Mammary epithelial cell (primary cell): ENCODE measurements at regions of chr2 and their contacts with region 1.

Region 1: DNA sequence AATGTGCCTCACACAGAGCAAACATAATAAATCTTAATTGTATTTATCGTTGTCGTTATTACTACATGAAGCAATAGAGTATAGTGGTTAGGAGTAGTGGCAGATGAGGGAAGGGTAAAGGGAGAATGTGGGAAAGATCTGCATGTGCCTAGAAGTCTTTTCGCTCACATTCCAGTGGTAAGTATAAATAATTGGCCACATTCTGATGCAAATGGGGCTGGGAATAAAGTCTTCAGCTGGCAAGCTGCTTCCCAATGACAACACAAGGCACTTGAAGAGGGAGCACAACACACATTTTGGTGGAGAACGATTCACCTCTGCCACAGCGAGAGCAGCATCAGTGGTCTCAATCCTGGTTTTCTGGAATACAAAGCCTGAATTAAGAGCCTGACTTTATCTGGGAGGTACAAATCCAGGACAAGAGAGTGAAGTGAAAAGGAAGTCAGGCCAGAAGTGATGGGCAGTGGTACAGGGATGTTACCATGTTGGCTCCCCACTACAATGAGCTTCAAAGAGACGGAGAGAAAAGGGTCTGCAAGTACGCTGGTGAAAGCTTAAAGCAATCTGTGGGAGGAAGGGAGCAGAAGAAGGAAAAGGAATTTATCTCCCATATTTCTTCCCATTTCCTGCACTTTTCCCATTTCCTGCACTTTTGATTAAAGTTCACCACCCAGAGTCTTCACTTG is 112.3 kb downstream of the ARHGAP15 start:
- DNase-seq: no peak
- H3K4me3 ChIP-seq: no peak overlapping the region
- H3K27ac ChIP-seq: no peak overlapping the region
- H3K4me1 ChIP-seq: no peaks in the 10 kb centered on the region
- H3K27me3 ChIP-seq: peaks cover 2% of the 10 kb centered on the region
- CTCF ChIP-seq: no peak

Region 2: DNA sequence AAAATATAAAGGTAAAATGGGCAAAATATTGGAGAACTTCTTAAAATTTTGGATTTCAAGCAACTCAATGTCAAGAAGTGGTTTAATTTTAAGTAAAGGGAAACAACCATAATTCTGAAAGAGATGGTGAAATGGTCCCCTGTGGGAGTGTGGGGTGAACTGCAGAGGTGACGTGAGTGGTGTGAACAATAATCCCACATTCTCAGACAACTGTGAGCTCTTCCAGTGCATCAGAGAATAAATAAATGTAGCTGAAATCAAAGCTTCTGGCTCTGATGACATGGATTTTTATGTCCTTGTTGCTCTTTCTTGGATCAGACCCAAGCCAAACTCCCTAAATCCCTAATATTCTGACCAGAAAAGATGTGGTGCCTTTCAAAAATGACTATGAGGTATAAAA is 605.7 kb after region 1 on chr2:
- CTCF ChIA-PET with region 1: interaction called, 15 read pairs
- dilution Hi-C with region 1: no loop called
- in situ Hi-C with region 1: no loop called
- intact Hi-C with region 1: no loop called
- DNase-seq: no peak
- H3K4me3 ChIP-seq: no peak overlapping the region
- H3K27ac ChIP-seq: no peak overlapping the region
- H3K4me1 ChIP-seq: no peaks in the 10 kb centered on the region
- H3K27me3 ChIP-seq: no peaks in the 10 kb centered on the region
- CTCF ChIP-seq: no peak